ENCODE measurements at regions of chr20 and their contacts with region 1.

Region 1: DNA sequence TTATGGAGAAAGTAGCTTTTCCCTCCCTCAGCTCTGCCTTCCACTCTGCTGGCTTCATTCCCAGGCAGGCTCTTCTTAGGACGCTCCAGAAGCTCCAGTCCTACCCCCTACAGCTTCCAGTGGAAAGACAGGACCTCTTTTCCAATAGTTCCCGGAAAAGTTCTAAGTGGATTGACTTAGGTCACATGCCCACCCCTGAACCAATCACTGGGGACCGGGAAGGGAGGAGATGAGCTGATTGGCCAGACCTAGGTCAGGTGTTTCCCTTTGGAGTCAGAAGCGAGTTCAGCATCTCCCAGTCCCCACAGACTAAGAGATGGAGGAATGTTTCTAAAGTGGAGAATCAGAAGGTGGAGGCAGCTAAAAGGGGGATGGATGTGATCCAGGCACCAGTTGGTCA is 62.9 kb upstream of the KCNG1 start:
- DNase-seq: no peak
- H3K4me3 ChIP-seq: no peak overlapping the region
- CTCF ChIP-seq: no peak

Region 2: DNA sequence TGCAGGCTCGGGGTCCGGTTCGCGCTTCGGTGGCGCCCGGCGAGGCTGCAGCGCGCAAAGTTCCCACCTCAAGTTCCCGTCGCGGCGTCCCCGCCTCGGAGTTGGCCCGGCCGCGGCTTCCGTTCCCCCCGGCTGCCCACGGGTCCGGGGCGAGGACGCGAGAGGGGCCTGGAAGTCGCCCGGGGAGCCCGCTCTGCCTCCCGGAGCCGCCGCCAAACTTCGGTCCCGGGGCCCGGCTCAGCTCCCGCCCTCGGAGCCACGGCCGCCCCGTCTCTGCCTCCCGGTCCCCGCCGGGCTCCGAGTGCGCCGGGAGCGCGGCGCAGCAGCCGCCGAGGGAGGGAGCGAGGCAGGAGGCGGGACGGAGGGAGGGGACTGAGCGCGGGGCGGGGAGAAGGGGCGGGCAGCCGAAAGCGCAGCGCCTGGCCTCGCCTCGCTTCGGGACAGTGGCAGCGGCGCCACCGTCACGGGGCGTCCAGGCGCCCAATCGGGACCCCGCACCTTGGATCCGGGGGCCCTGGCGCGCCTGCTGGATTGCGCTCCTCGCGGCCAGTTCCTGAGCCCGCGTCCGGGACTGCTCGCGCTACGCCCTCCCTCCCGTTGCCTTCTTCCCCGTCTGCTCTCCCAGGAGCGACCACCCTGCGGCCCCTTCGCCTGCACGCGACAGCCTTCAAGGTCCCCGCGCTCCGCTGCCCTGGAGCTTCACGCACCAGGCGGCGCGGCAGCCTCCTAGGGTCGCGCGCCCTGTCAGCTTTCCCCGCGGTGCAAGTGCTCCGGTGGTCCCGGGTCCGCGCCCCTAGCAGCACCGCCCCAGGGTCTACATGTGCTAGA is 62.7 kb before region 1 on chr20 and contains the start of gene KCNG1:
- in situ Hi-C with region 1: loop called (anchors 5 kb)
- DNase-seq: no peak
- H3K4me3 ChIP-seq: peak within 1 kb of the TSS; percentile 68
- CTCF ChIP-seq: no peak

Region 3: GRCh38 chr20:51169813-51170212 is 84.1 kb after region 1 on chr20:
- in situ Hi-C with region 1: loop called (anchors 5 kb)
- DNase-seq: no peak
- H3K4me3 ChIP-seq: no peak overlapping the region
- CTCF ChIP-seq: no peak

Region 4: DNA sequence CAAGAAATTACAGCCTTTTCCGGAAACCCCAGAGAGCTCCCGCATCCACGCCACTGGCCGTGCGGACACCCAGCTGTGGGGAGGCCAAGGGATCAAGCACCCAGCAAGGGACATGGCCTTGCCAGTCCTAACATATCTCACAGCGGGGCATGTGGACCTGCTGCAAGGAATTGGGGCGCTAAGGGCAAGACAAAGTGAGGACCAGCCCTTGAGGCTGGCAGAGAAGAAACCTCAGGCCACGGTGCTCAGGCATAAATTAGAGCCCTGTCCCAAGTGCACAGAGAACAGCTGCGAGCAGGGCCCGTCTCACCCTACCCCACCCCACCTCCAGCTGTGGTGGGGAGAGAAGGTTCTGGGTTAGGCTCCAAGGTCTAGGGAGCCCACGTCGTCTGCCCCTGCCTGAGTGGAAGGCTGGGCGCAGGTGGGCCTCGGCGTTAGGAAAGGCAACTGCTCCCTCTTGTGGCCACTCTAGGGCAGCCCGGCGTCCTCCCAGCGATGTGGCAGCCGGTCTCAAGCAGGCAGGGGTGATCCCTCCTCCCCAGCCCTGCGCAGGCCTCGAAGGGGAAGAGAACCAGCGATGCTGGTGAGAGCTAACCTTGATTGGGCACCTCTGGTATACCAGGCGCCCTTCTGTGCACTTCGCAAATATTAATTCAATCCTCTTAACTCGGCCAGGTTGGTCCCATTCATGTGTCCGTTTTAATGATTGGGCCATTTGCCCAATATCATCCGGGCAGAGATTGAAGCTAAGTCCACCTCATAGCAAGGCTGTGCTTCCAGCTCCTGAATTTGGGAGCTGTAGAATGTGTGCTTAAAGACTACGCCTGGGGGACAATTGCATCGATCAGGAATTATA is 221.0 kb after region 1 on chr20:
- in situ Hi-C with region 1: no loop called
- DNase-seq: peak; percentile 47
- H3K4me3 ChIP-seq: no peak overlapping the region
- CTCF ChIP-seq: peak; percentile 86

Measured in astrocyte of the cerebellum (primary cell).